Activated CD4-positive, alpha-beta T cell treated with anti-CD3 and anti-CD28 coated beads, Interleukin-2, amount 10 ng/mL, durations not matched to agents 24 days and 14 days (primary cell): ENCODE measurements at regions of chr5 and their contacts with region 1.

Region 1: GRCh38 chr5:160199410-160199911 is 29.8 kb upstream of the FABP6 start:
- DNase-seq: peak; percentile 93
- H3K4me3 Mint-ChIP-seq: peak overlapping the region; percentile 83
- H3K27ac Mint-ChIP-seq: no peak overlapping the region
- H3K4me1 Mint-ChIP-seq: peaks cover 4% of the 10 kb centered on the region
- H3K27me3 Mint-ChIP-seq: peaks cover 14% of the 10 kb centered on the region

Region 2: DNA sequence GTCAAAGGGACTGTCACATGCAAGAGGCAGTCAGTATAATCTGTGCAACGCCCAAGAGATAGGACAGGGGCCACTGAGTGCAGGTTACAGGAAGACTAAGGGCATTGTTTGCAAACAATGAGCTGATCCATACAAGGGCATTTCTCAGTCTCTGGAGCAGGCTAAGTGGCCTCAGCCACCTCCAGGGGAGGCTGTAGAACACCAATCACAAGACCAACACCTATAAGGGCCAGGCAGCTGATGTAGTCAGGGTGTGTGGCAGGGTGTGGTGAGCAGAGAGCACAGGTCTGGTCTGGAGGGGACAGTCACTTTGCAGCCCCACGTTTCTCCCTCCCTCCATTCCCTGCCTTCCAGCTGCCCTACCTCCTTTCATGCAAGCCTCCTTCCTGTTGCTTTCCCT is 366.4 kb before region 1 on chr5:
- intact Hi-C with region 1: no loop called
- DNase-seq: no peak
- H3K4me3 Mint-ChIP-seq: no peak overlapping the region
- H3K27ac Mint-ChIP-seq: no peak overlapping the region
- H3K4me1 Mint-ChIP-seq: no peaks in the 10 kb centered on the region
- H3K27me3 Mint-ChIP-seq: peaks cover 4% of the 10 kb centered on the region

Region 3: DNA sequence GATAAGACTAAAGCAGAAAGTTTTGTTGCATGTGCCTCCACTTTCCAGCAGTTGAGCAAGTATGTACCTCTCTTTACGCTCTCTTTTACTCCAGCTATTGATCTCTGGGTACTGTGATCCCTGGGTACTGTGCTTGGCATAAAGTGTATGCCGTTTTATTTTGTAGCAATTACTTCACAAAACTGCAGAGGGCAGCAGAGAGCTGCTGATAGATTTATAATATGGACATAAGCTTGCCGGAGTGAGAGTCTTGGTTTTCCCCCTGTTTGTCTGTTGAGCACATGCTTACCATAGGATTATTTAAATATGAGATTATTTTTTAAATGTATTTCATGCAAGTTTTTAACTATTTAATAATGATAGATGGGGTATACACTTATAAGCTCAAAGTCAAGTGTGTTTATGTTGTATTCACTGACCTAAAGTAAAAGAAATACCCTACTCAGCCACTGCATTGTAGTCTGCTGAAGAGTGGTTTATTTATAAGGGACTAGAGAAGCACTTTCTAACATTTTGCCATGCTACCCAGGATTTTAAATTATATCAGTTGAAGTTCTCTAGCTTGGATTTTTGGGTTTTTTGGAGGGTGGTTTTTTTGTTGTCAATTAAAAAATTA is 177.5 kb before region 1 on chr5:
- intact Hi-C with region 1: loop called (anchors 5 kb)
- DNase-seq: peak; percentile 89
- H3K4me3 Mint-ChIP-seq: no peak overlapping the region
- H3K27ac Mint-ChIP-seq: no peak overlapping the region
- H3K4me1 Mint-ChIP-seq: peaks cover 15% of the 10 kb centered on the region
- H3K27me3 Mint-ChIP-seq: no peaks in the 10 kb centered on the region

Region 4: DNA sequence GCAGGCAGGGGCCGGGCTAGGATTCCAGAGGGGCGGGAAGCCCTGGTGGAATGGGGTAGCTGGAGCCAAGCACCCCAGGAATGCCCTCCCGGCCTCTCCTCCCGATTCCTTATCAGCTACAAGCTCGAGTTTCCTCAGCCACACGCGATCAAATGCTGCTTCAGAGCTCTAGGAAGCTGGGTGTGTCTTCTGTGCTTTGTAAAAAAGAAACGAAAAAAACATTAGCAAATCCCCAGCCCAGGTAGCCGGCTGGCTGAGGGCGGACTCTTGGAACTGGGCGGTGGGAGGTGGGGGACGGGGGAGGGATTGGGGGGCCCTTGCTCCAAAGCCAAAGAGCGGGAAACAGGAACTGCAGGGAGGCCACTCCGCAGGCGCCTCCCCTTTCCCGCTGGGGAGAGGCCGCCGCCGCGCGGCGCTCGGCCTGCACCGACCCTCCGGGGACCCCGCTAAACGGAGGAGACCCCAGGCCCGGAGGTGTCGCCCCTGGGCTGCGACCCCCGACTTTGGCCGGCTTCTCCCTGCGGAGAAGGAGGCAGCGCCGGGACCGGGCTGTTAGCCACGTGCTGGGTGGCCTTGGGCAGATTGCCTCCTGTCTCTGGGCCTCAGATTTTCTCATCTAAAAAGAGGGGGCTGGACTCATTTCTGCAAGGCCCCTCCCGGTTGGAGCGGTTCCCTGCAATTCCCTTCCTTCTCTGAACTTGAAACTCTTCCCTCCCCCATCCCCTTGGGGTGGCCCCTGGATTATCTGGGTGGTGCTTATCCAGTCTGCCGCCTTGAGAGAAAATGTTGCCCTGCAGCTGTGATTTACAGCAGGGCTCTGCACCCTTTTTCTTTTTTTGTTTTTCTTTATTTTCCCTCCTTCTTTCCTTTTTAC is 11.1 kb before region 1 on chr5:
- intact Hi-C with region 1: no loop called
- DNase-seq: peak; percentile 63
- H3K4me3 Mint-ChIP-seq: peak overlapping the region; percentile 58
- H3K27ac Mint-ChIP-seq: peak overlapping the region; percentile 32
- H3K4me1 Mint-ChIP-seq: peaks cover 2% of the 10 kb centered on the region
- H3K27me3 Mint-ChIP-seq: peaks cover 6% of the 10 kb centered on the region

Region 5: GRCh38 chr5:160342403-160342941 is 143.0 kb after region 1 on chr5:
- intact Hi-C with region 1: loop called (anchors 1 kb)
- DNase-seq: no peak
- H3K4me3 Mint-ChIP-seq: no peak overlapping the region
- H3K27ac Mint-ChIP-seq: no peak overlapping the region
- H3K4me1 Mint-ChIP-seq: peaks cover 2% of the 10 kb centered on the region
- H3K27me3 Mint-ChIP-seq: no peaks in the 10 kb centered on the region

Region 6: DNA sequence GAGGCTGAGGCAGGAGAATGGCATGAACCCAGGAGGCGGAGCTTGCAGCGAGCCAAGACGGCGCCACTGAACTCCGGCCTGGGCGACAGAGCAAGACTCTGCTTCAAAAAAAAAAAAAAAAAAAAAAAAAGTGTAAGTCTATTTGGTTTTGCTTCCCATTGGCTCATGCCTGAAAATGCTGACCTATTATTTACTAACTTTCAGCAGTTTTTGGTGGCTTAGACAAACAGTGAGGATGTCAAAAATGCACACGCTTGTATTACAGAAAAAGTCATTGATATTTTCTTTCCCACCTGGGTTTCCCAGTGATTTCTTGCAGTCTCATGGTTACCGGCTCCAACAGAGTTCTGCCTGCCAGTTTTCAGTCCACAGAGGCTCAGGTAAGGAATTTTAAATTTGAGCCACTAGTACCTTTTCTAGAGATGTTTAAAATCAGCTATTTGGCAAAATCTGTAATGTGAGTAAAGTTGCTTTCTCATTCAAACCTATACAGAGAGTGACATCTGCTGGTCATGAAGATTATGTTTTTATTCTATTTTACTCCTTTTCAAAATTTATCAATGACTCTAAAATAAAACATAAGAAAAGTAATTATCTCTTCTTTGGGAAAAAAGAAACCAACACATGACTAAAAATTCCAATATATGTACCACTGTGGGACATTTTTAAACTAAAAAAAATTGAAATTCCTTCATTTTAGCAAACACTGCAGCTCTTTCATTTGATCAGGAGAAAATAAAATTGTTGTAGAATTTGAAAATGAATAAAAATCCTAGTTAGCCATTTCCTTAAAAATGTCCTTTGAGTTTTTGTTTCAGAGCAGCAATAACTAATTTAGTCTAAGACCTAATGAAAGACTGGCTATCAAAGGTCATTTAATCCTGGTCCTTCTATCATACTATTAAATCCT is 191.6 kb after region 1 on chr5:
- intact Hi-C with region 1: loop called (anchors 1 kb)
- DNase-seq: no peak
- H3K4me3 Mint-ChIP-seq: no peak overlapping the region
- H3K27ac Mint-ChIP-seq: no peak overlapping the region
- H3K4me1 Mint-ChIP-seq: no peaks in the 10 kb centered on the region
- H3K27me3 Mint-ChIP-seq: peaks cover 5% of the 10 kb centered on the region